ENCODE measurements at regions of chr1 and their contacts with region 1.

Region 1: DNA sequence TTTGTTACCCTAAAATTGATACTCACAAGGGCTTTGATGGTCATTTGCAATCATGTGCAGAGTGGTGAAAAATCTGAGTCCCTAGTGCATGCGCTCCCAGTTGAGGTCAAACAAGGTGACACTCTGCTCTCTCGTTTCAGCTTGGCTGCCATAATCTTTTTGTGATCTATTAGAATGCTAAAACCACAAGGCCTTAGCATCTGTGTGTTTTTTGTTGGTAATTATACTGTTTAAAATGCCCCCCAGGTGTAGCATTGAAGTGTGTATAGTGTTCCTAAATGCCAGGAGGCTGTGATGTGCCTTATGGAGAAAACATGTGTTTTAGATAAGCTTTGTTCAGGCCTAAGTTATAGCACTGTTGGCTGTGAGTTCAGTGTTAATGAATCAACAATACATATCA is 89.3 kb downstream of the PLD5 start:
- DNase-seq: no peak
- ATAC-seq: no peak
- H3K4me3 ChIP-seq: no peak overlapping the region
- H3K27ac ChIP-seq: no peak overlapping the region
- H3K4me1 ChIP-seq: no peaks in the 10 kb centered on the region
- H3K27me3 ChIP-seq: no peaks in the 10 kb centered on the region
- CTCF ChIP-seq: no peak
- POLR2A ChIP-seq: no peak
- RAD21 ChIP-seq: no peak

Region 2: DNA sequence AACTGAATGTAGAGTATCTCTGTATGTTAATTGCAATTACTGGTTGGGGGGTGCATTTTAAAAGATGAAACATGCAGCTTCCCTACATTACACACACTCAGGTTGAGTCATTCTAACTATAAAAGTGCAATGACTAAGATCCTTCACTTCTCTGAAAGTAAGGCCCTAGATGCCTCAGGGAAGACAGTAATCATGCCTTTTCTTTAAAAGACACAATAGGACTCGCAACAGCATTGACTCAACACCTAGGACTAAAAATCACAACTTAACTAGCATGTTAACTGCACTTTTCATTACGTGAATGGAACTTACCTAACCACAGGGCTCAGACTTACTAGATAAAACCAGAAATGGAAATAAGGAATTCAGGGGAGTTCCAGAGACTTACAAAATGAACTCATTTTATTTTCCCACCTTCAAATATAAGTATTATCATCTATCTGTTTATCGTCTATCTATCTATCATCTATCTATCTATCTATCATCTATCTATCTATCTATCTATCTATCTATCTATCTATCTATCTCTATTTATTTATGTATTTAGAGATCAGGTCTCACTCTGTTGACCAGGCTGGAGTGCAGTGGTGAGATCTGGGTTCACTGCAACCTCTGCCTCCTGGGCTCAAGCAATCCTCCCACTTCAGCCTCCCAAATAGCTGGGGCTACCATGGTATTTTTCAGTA is 842.8 kb before region 1 on chr1:
- CTCF ChIA-PET with region 1: no interaction called
- POLR2A ChIA-PET with region 1: no interaction called
- dilution Hi-C with region 1: no loop called
- in situ Hi-C with region 1: no loop called
- intact Hi-C with region 1: no loop called
- DNase-seq: peak; percentile 82
- ATAC-seq: peak; percentile 66; the same call in 1 of the 2 replicates
- H3K4me3 ChIP-seq: no peak overlapping the region
- H3K27ac ChIP-seq: no peak overlapping the region
- H3K4me1 ChIP-seq: peaks cover 6% of the 10 kb centered on the region
- H3K27me3 ChIP-seq: no peaks in the 10 kb centered on the region
- CTCF ChIP-seq: no peak
- POLR2A ChIP-seq: no peak
- RAD21 ChIP-seq: no peak

Region 3: GRCh38 chr1:242477944-242478343 is 42.7 kb after region 1 on chr1:
- CTCF ChIA-PET with region 1: no interaction called
- POLR2A ChIA-PET with region 1: no interaction called
- dilution Hi-C with region 1: no loop called
- in situ Hi-C with region 1: no loop called
- intact Hi-C with region 1: loop called (anchors 1 kb)
- DNase-seq: no peak
- ATAC-seq: no peak
- H3K4me3 ChIP-seq: no peak overlapping the region
- H3K27ac ChIP-seq: no peak overlapping the region
- H3K4me1 ChIP-seq: no peaks in the 10 kb centered on the region
- H3K27me3 ChIP-seq: no peaks in the 10 kb centered on the region
- CTCF ChIP-seq: no peak
- POLR2A ChIP-seq: no peak
- RAD21 ChIP-seq: no peak

Region 4: DNA sequence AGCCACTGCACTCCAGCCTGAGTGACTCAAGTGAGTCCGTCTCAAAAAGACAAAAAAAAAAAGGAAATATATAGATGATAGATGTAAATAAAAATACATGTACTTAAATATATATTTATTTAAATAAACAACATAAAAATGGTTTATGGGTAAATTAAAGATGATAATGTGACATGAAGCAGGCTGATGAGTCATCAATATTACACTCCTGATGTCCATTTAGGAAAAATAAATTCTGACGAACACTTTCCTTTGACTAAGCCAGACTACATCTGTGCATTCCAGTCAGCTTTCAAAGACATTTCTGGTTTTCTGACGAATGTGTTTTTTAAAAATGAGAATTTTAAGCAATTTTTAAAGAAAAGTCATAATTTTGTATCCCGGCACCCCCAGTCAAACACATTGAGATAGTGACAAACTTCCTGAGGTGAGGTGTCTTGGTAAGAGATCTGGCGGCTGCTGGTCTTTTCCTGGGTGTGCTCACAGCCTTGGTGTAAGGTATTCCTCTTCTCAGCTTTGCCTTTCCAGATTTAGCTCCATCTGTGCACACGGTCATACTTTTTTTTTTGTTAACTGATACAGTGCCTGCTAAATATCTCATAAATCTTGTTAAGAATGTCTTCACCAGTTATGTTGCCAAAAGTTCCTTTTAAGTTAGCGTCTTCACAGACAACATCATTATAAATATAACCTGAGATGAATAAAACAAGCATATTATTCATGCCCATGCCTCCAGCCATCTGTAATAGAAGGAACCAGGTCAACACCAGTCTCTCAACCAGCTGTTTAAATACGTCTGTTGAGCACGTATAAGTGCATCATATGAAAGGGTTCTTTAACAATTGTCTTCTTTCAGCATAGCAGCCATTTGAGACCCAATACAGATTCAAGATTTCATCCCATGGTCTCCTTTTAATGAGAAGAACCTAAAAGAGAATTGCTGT is 303.8 kb after region 1 on chr1:
- CTCF ChIA-PET with region 1: no interaction called
- POLR2A ChIA-PET with region 1: no interaction called
- dilution Hi-C with region 1: no loop called
- in situ Hi-C with region 1: no loop called
- intact Hi-C with region 1: no loop called
- DNase-seq: no peak
- ATAC-seq: no peak
- H3K4me3 ChIP-seq: no peak overlapping the region
- H3K27ac ChIP-seq: no peak overlapping the region
- H3K4me1 ChIP-seq: no peaks in the 10 kb centered on the region
- H3K27me3 ChIP-seq: no peaks in the 10 kb centered on the region
- CTCF ChIP-seq: no peak
- POLR2A ChIP-seq: no peak
- RAD21 ChIP-seq: no peak